PC-9 (cell line): ENCODE measurements at regions of chr1 and their contacts with region 1.

Region 1: GRCh38 chr1:6245086-6245868 is 1.3 kb downstream of the HES3 start:
- DNase-seq: peak; percentile 47 to 82
- H3K4me3 ChIP-seq: peak overlapping the region; percentile 42; the same call in 1 of the 2 replicates
- H3K27ac ChIP-seq: no peak overlapping the region
- H3K4me1 ChIP-seq: no peaks in the 10 kb centered on the region
- H3K27me3 ChIP-seq: peaks cover 17% of the 10 kb centered on the region
- CTCF ChIP-seq: peak; percentile 68

Region 2: GRCh38 chr1:6108937-6109614 is 136.2 kb before region 1 on chr1:
- CTCF ChIA-PET with region 1: interaction called, 10 read pairs
- POLR2A ChIA-PET with region 1: no interaction called
- intact Hi-C with region 1: loop called (anchors 1 kb)
- DNase-seq: peak; percentile 34 to 62
- H3K4me3 ChIP-seq: no peak overlapping the region
- H3K27ac ChIP-seq: no peak overlapping the region
- H3K4me1 ChIP-seq: no peaks in the 10 kb centered on the region
- H3K27me3 ChIP-seq: 0 out of 2 replicates have a peak, but pooled peaks cover 6% of the 10 kb centered on the region
- CTCF ChIP-seq: peak; percentile 74

Region 3: GRCh38 chr1:6287431-6287886 is 42.2 kb after region 1 on chr1:
- CTCF ChIA-PET with region 1: no interaction called
- POLR2A ChIA-PET with region 1: no interaction called
- intact Hi-C with region 1: no loop called
- DNase-seq: no peak
- H3K4me3 ChIP-seq: no peak overlapping the region
- H3K27ac ChIP-seq: no peak overlapping the region
- H3K4me1 ChIP-seq: no peaks in the 10 kb centered on the region
- H3K27me3 ChIP-seq: no peaks in the 10 kb centered on the region
- CTCF ChIP-seq: no peak

Region 4: GRCh38 chr1:6343506-6344405 is 98.5 kb after region 1 on chr1:
- CTCF ChIA-PET with region 1: interaction called, 3 read pairs
- POLR2A ChIA-PET with region 1: interaction called, 5 read pairs
- intact Hi-C with region 1: loop called (anchors 1 kb)
- DNase-seq: peak; percentile 88 to 92
- H3K4me3 ChIP-seq: no peak overlapping the region
- H3K27ac ChIP-seq: no peak overlapping the region
- H3K4me1 ChIP-seq: peaks cover 7% of the 10 kb centered on the region
- H3K27me3 ChIP-seq: no peaks in the 10 kb centered on the region
- CTCF ChIP-seq: peak; percentile 93

Region 5: GRCh38 chr1:6438047-6438525 is 192.8 kb after region 1 on chr1:
- CTCF ChIA-PET with region 1: interaction called, 5 read pairs
- POLR2A ChIA-PET with region 1: no interaction called
- intact Hi-C with region 1: loop called (anchors 2 kb)
- DNase-seq: peak; percentile 52 to 76
- H3K4me3 ChIP-seq: no peak overlapping the region
- H3K27ac ChIP-seq: no peak overlapping the region
- H3K4me1 ChIP-seq: no peaks in the 10 kb centered on the region
- H3K27me3 ChIP-seq: no peaks in the 10 kb centered on the region
- CTCF ChIP-seq: peak; percentile 89

Region 6: DNA sequence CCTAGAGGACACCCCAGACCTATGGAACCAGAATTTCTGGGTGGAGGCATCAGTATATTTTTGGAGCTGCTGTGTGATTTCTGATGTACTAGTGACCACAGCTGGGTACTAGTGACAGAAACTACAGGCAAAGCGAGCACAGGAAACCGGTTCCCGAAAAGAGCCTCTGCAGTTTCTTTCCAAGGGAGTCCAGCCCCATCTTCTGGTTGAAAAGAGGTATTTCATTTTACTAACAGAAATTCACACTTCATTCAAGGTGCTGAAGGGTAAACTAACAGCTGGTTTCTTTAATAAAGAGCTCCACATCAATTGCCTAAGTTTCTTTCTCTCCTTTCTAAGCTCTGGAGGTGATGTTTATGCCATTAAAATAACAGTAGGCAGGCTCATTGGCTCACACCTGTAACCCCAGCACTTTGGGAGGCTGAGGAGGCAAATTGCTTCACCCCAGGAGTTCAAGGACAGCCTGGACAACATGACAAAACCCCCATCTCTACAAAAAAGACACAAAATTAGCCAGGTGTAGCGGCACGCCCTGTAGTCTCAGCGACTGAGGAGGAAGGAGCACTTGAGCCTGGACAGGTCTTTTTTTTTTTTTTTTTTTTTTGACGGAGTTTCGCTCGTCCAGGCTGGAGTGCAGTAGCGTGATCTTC is 401.3 kb after region 1 on chr1:
- CTCF ChIA-PET with region 1: no interaction called
- POLR2A ChIA-PET with region 1: no interaction called
- intact Hi-C with region 1: loop called (anchors 5 kb)
- DNase-seq: peak; percentile 7 to 40
- H3K4me3 ChIP-seq: no peak overlapping the region
- H3K27ac ChIP-seq: no peak overlapping the region
- H3K4me1 ChIP-seq: no peaks in the 10 kb centered on the region
- H3K27me3 ChIP-seq: no peaks in the 10 kb centered on the region
- CTCF ChIP-seq: peak; percentile 64